HepG2 (cell line): ENCODE measurements at regions of chr7 and their contacts with region 1.

Region 1: GRCh38 chr7:103989785-103990767 is 618 bp upstream of the RELN start:
- DNase-seq: peak; percentile 59
- ATAC-seq: peak; percentile 85
- H3K4me3 ChIP-seq: peak overlapping the region; percentile 61 to 79 (median 63)
- H3K27ac ChIP-seq: peak overlapping the region; percentile 87
- H3K4me1 ChIP-seq: peaks cover 43% of the 10 kb centered on the region
- H3K27me3 ChIP-seq: peaks cover 0 to 4% of the 10 kb centered on the region in 2 experiments; a peak in 2 of 5 replicates
- CTCF ChIP-seq: peak; percentile 55
- EP300 ChIP-seq: no peak
- POLR2A ChIP-seq: peak in 1 of 2 experiments; percentile 61; a peak in 3 of 4 replicates
- RAD21 ChIP-seq: peak; percentile 64; the same call in 1 of the 2 replicates

Region 2: DNA sequence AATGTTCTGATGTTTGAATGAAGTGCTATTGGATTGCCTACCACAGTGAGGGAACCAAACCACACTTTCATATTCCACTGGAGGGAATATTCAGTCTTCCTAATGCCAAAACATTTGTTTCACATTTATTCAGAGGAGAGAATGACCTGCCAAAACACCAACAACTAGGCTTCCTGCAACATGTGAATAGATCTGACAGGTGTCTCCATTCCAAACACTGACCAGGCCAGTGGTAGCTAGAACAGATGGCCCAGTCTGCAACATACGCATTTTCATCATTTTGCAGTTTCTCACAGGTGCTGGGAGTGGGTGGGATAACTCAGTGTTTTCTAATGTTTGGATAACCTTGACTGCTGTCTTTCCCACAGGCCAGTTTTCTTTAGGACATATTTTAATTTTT is 110.7 kb before region 1 on chr7:
- CTCF ChIA-PET with region 1: no interaction called
- POLR2A ChIA-PET with region 1: no interaction called
- in situ Hi-C with region 1: no loop called
- intact Hi-C with region 1: no loop called
- DNase-seq: no peak
- ATAC-seq: no peak
- H3K4me3 ChIP-seq: no peak overlapping the region
- H3K27ac ChIP-seq: no peak overlapping the region
- H3K4me1 ChIP-seq: peaks cover 15% of the 10 kb centered on the region
- H3K27me3 ChIP-seq: no peaks in the 10 kb centered on the region; a peak in 1 of 5 replicates
- CTCF ChIP-seq: no peak
- EP300 ChIP-seq: no peak
- POLR2A ChIP-seq: no peak
- RAD21 ChIP-seq: no peak

Region 3: DNA sequence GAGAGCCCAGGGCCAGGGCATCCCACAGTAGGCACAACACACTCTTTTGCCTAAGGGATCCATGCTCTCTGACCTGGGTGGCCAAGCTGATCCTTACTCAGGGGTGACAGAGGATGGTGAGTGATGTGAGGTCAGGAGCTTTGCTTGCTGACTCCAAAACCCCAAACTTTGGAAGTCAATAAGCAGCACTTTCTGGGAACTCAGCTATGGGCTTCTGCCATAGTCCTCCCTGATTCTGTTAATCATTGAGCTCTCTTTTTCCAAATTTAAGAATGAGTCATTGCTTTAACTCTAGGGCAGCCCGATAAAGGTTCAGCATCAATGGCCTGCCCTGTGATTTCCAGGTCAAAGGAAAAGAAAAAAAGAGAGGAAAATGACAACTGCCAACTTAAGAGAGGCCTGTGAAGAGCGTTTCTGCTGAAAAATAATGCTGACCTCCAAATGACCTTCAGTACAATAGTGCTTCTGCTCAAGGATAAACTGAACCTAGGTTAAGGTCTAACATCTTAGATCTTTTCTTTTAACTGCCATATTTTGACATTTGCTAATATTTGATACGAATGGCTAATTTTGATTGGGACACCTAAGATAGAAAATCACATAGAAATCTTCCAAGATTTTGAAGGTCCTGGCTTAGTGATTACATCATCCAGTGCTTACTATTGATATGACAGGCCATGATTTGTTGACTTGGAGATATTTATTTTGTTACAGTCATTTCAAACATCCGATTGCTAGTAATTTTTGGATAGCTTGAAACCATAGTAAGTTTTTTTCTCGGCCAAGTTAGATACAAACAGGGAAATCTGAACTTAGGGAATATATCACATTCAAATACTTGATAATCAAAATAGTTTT is 20.2 kb after region 1 on chr7:
- CTCF ChIA-PET with region 1: no interaction called
- POLR2A ChIA-PET with region 1: interaction called, 10 read pairs
- in situ Hi-C with region 1: no loop called
- intact Hi-C with region 1: loop called (anchors 2 kb)
- DNase-seq: peak; percentile 81
- ATAC-seq: peak; percentile 96
- H3K4me3 ChIP-seq: peak overlapping the region in 1 of 3 experiments; percentile 6; a peak in 1 of 6 replicates
- H3K27ac ChIP-seq: peak overlapping the region; percentile 44
- H3K4me1 ChIP-seq: peaks cover 52% of the 10 kb centered on the region
- H3K27me3 ChIP-seq: no peaks in the 10 kb centered on the region
- CTCF ChIP-seq: 0 out of 2 replicates have a peak, but pooled peaks have one; percentile 6
- EP300 ChIP-seq: peak in 1 of 2 experiments; percentile 42; a peak in 2 of 4 replicates
- POLR2A ChIP-seq: no peak
- RAD21 ChIP-seq: no peak

Region 4: GRCh38 chr7:104065491-104065890 is 75.4 kb after region 1 on chr7:
- CTCF ChIA-PET with region 1: no interaction called
- POLR2A ChIA-PET with region 1: interaction called, 6 read pairs
- in situ Hi-C with region 1: no loop called
- intact Hi-C with region 1: loop called (anchors 5 kb)
- DNase-seq: peak; percentile 16
- ATAC-seq: peak; percentile 81
- H3K4me3 ChIP-seq: peak overlapping the region in 2 of 3 experiments; percentile 40 to 46; a peak in 3 of 6 replicates
- H3K27ac ChIP-seq: peak overlapping the region; percentile 76
- H3K4me1 ChIP-seq: peaks cover 64% of the 10 kb centered on the region
- H3K27me3 ChIP-seq: no peaks in the 10 kb centered on the region
- CTCF ChIP-seq: no peak
- EP300 ChIP-seq: no peak
- POLR2A ChIP-seq: no peak
- RAD21 ChIP-seq: no peak

Region 5: GRCh38 chr7:104096683-104097082 is 106.6 kb after region 1 on chr7:
- CTCF ChIA-PET with region 1: no interaction called
- POLR2A ChIA-PET with region 1: interaction called, 10 read pairs
- in situ Hi-C with region 1: no loop called
- intact Hi-C with region 1: loop called (anchors 2 kb)
- DNase-seq: peak; percentile 78
- ATAC-seq: peak; percentile 97
- H3K4me3 ChIP-seq: no peak overlapping the region
- H3K27ac ChIP-seq: no peak overlapping the region
- H3K4me1 ChIP-seq: peaks cover 9% of the 10 kb centered on the region; the same call in 1 of the 2 replicates
- H3K27me3 ChIP-seq: no peaks in the 10 kb centered on the region; a peak in 1 of 5 replicates
- CTCF ChIP-seq: peak; percentile 84
- EP300 ChIP-seq: no peak
- POLR2A ChIP-seq: no peak
- RAD21 ChIP-seq: peak; percentile 83